Activated naive CD4-positive, alpha-beta T cell treated with anti-CD3 and anti-CD28 coated beads for 36 hours (primary cell): ENCODE measurements at regions of chr4 and their contacts with region 1.

Region 1: DNA sequence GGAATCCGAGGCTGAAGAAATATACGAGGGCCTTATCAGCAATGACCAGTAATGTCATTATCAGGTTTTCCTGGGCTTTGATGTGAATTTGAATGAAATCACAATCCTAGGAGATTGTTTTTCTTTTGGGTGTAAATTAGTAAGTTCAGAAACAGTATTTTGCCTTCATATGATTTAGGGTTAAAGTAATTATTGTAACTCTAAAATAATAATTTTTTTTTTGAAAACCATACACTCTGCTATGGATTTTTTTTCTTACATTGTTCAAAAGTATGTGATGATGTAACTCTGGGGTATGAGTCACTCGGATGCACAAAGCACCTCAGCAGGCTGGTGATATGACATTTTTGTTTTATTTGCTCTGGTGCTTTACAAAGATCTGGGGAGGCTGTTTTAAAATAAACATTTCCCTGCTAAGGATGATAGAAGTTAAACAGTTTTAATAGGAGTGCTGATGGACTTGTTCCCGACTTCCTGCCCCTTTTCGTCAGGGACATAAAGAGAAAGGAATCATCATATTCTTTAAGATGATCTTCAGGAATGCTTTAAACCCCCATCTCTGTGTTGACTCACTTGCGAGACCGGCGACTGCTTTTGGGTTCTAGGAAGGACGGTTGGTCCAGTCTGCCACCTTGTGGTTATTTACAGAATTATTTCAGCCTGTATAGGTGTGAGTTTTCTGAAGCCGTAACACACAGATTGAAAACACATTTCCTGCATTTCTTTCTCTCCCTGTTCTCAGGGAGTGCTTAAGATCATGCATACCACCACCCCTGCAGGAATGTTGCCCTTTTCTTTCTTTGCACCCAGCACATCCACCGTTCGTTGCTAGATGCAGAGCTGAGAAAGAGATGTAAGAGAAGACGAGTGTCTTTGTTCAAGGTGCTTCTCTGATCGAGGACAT is 72.5 kb downstream of the RAPGEF2 start:
- DNase-seq: peak; percentile 76
- H3K4me3 Mint-ChIP-seq: peak overlapping the region; percentile 44
- H3K27ac Mint-ChIP-seq: no peak overlapping the region
- H3K4me1 Mint-ChIP-seq: peaks cover 75% of the 10 kb centered on the region
- H3K27me3 Mint-ChIP-seq: peaks cover 3% of the 10 kb centered on the region

Region 2: GRCh38 chr4:158722917-158723793 is 452.2 kb before region 1 on chr4 and contains the start of gene PPID:
- CTCF ChIA-PET with region 1: no interaction called
- intact Hi-C with region 1: loop called (anchors 2 kb)
- DNase-seq: peak; percentile 88
- H3K4me3 Mint-ChIP-seq: peak within 1 kb of the TSS; percentile 98
- H3K27ac Mint-ChIP-seq: peak within 1 kb of the TSS; percentile 99
- H3K4me1 Mint-ChIP-seq: peaks cover 41% of the 10 kb centered on the region
- H3K27me3 Mint-ChIP-seq: no peaks in the 10 kb centered on the region
- total RNA-seq, gene PPID: 55.4 to 55.6 TPM

Region 3: DNA sequence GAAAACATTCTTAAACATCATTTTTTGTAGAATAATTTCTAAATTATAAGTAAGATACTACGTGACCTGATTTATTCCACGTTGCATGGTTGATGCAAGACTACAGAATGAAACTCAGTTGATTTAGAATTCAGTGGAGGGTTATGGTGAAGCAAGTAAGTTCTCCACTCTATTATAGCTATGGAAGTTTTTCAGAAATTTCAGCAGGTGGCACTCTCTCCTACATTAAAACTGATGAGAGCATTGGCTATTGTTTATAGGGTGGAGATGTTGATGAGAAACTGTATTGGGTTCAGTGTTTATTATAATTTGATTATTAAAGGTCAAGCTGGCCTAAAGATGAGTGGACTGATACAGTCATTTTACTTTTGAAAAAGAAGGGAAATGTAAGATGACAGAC is 318.5 kb before region 1 on chr4:
- CTCF ChIA-PET with region 1: interaction called, 3 read pairs
- intact Hi-C with region 1: loop called (anchors 1 kb)
- DNase-seq: no peak
- H3K4me3 Mint-ChIP-seq: no peak overlapping the region
- H3K27ac Mint-ChIP-seq: no peak overlapping the region
- H3K4me1 Mint-ChIP-seq: no peaks in the 10 kb centered on the region
- H3K27me3 Mint-ChIP-seq: no peaks in the 10 kb centered on the region

Region 4: DNA sequence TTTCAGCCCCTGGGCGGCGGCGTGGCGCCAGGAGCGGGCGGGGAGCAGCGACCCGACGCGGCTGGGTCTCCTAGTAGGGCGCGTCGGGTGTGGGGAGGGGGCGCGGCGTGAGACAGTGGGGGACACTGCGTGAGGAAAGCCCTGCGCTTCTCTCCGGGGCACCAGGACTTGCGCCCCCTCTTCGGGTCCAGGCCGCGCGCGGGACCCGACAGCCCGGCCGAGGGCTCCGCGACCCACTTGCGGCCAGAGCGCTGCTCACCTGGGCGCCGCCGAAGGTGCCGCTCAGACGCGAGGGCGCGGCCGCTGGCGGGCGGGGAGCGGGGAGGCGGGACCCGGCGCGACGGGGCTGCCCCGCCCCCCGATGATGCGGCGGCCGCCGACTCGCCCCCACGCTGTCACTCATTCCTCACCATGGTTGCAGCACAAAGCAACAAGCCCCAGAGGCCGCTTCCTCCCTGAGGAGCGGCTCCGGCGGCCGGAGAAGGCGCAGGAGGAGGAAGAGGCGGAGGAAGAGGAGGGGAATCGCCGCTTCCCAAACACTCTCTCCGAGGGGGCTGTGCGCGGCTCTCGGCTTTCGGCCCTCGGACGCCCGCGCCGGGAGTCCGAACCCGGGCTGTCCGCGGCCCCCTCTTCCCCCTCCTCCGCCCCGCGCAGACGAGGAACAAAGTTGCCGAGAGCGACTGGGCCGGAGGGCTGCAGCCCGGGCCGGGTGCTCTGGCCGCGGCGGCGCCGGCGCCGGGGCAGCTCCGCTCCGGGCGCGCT is 72.5 kb before region 1 on chr4 and contains the start of gene RAPGEF2:
- CTCF ChIA-PET with region 1: no interaction called
- intact Hi-C with region 1: loop called (anchors 1 kb)
- DNase-seq: peak; percentile 91
- H3K4me3 Mint-ChIP-seq: peak within 1 kb of the TSS; percentile 80
- H3K27ac Mint-ChIP-seq: peak within 1 kb of the TSS; percentile 88
- H3K4me1 Mint-ChIP-seq: peaks cover 47% of the 10 kb centered on the region
- H3K27me3 Mint-ChIP-seq: no peaks in the 10 kb centered on the region
- total RNA-seq, gene RAPGEF2: 21.2 to 26.1 TPM